ENCODE measurements at regions of chr3 and their contacts with region 1.

Region 1: DNA sequence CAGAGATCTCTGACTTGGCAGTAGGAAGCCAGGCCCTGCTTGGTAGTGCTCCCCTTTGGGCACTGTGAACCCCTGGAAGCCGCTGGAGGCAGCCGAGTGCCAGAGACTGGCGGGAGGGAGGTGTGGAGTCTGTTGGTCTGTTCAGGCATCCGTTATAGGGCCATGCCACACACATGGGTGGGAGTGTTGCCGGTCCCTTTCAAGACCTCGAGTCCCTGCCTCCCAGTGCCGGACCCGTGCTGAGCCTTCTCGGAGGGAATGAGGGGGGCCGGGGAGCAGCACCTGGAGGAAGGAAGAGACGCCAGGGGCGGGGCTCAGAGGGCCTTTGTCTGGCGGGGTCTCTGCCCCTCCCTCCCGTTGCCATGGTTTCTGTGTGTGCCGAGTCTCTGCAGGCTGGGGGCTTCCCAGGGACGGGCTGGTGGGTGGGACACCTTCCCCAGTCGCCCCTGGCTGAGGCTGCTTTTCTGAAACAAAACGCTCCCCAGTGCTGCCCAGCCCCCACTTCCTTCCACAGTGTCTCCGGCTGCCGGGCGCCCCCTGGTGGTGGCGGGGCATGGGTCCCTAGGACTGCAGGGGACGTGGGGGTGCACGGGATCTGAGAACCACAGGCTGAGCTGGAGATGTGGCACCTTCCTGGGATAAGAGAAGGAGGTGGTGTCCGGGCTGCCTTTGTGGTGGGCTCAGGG is 10.0 kb downstream of the GNAI2 start:
- DNase-seq: peak; percentile 92 to 99 (median 95)
- ATAC-seq: peak; percentile 83 to 87
- H3K4me3 Mint-ChIP-seq: peak overlapping the region; percentile 72 to 89 (median 83)
- H3K27ac Mint-ChIP-seq: peak overlapping the region; percentile 43 to 97 (median 95)
- H3K4me1 Mint-ChIP-seq: peaks cover 34 to 90% (median 82%) of the 10 kb centered on the region in 4 donors
- H3K27me3 Mint-ChIP-seq: no peaks in the 10 kb centered on the region

Region 2: DNA sequence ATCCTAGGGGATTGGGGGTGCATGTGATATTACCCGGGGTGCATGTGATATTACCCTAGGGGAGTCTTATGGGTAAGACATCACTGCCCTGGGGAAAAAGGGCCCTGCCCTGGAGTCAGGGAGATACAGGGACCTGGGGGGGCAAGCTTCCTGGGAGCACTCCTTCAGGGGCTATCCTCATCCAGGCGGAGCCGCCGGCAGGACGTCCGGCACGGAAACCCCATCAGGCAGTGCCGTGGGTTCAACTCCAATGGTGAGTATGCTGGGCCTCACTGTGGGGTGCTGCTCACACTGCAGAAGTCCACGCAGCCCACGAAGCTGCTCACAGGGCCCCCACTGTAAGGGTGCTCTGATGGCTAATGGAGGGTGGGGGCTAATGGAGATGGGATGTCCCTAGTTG is 59.9 kb before region 1 on chr3:
- POLR2A ChIA-PET with region 1: no interaction called
- DNase-seq: no peak
- ATAC-seq: no peak
- H3K4me3 Mint-ChIP-seq: no peak overlapping the region
- H3K27ac Mint-ChIP-seq: no peak overlapping the region
- H3K4me1 Mint-ChIP-seq: no peaks in the 10 kb centered on the region
- H3K27me3 Mint-ChIP-seq: peaks cover 0 to 10% (median 0%) of the 10 kb centered on the region in 5 donors

Region 3: GRCh38 chr3:50227390-50228183 is 18.4 kb before region 1 on chr3:
- POLR2A ChIA-PET with region 1: interaction called, 66 read pairs
- DNase-seq: peak; percentile 85 to 94 (median 92)
- ATAC-seq: peak; percentile 83 to 84
- H3K4me3 Mint-ChIP-seq: peak overlapping the region; percentile 90 to 99 (median 95)
- H3K27ac Mint-ChIP-seq: peak overlapping the region; percentile 88 to 96 (median 95)
- H3K4me1 Mint-ChIP-seq: peaks cover 21 to 50% (median 27%) of the 10 kb centered on the region in 4 donors
- H3K27me3 Mint-ChIP-seq: peaks cover 0 to 3% (median 0%) of the 10 kb centered on the region in 5 donors

Region 4: DNA sequence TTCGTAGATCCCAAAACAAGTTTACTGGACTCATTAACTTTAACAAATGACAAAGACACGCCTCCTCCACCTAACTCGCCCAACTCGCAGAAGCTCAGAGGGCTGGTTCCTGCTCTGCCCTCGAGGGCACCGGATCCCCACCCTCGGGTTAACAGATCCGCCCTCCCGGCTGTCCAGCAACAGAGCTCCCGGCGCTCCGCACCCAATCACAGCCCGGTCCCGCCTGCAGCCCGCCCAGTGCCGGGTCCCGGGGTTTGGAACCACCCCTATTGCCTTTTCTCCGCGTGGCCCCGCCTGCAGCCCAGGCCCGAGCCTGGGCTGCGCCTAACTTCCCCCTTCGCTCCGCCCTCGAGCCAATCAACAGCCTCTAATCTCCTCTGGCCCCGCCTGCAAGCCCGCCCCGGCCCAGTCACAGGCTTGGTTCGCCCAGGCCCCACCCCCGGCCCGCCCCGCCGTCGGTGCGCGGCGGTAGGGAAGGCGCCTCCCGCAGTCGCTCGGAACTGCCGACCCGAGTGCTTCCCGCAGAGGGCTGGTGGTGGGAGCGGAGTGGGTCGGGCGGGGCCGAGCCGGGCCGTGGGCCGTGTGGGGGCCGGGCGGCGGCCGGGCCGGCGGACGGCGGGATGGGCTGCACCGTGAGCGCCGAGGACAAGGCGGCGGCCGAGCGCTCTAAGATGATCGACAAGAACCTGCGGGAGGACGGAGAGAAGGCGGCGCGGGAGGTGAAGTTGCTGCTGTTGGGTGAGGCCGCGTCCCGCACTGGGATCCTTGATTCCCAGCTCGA is 10.1 kb before region 1 on chr3 and contains the start of gene GNAI2:
- POLR2A ChIA-PET with region 1: interaction called, 72 read pairs
- DNase-seq: peak; percentile 93 to 100 (median 99)
- ATAC-seq: peak; percentile 88 to 91
- H3K4me3 Mint-ChIP-seq: peak within 1 kb of the TSS; percentile 94 to 99 (median 98)
- H3K27ac Mint-ChIP-seq: peak within 1 kb of the TSS; percentile 93 to 98 (median 96)
- H3K4me1 Mint-ChIP-seq: peaks cover 21 to 56% (median 45%) of the 10 kb centered on the region in 4 donors
- H3K27me3 Mint-ChIP-seq: no peaks in the 10 kb centered on the region
- polyA plus RNA-seq, gene GNAI2: 405 to 534 (median 417) TPM

Region 5: GRCh38 chr3:50260027-50260941 is 14.3 kb after region 1 on chr3:
- POLR2A ChIA-PET with region 1: interaction called, 23 read pairs
- DNase-seq: peak; percentile 65 to 87 (median 81)
- ATAC-seq: peak; percentile 94 to 95
- H3K4me3 Mint-ChIP-seq: peak overlapping the region; percentile 61 to 85 (median 75)
- H3K27ac Mint-ChIP-seq: peak overlapping the region in 8 of 10 donors; percentile 39 to 93 (median 87)
- H3K4me1 Mint-ChIP-seq: peaks cover 2 to 14% (median 10%) of the 10 kb centered on the region in 4 donors
- H3K27me3 Mint-ChIP-seq: no peaks in the 10 kb centered on the region

Region 6: DNA sequence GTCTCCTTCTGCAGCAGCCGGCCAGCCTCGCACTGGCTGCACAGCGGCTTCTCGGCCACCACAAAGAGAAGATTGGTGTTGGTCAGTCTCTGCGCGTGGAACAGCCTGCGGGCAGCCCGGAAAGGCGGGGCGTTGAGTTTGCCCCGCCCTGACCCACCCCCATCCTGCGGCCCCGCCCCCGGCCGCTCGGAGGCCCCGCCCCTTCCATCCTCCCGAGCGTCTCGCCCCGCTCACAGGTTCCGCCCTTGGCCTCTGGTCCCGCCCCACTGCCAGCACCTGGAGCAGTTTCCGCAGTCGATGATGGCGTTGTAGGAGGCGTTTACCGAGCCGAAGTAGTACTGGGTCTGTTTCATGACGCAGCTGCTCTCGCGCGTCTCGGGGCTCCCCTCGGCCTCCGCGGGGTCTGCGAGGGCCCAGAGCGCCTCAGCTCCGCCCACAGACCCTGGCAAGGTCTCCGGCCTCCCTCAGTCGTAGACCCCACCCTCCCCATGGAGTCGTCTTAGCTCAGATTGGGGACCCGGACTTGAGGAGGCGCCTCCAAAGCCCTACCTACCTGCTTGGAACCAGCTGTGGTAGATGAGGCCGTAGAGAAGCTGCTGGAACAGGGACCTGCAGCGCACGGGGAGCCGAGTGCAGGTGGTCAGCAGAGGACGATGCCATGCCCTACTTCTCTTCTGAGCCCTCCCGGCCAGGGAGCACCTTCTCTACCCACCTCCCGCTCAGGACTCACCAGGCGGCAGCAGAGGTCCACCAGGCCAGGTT is 119.3 kb after region 1 on chr3:
- POLR2A ChIA-PET with region 1: no interaction called
- DNase-seq: peak; percentile 91 to 98 (median 94)
- ATAC-seq: peak; percentile 96 to 97
- H3K4me3 Mint-ChIP-seq: peak overlapping the region; percentile 87 to 93 (median 88)
- H3K27ac Mint-ChIP-seq: peak overlapping the region; percentile 81 to 97 (median 96)
- H3K4me1 Mint-ChIP-seq: peaks cover 14 to 44% (median 31%) of the 10 kb centered on the region in 4 donors
- H3K27me3 Mint-ChIP-seq: no peaks in the 10 kb centered on the region

Measured in naive thymus-derived CD8-positive, alpha-beta T cell (primary cell).